ENCODE measurements at regions of chr12 and their contacts with region 1.

Region 1: DNA sequence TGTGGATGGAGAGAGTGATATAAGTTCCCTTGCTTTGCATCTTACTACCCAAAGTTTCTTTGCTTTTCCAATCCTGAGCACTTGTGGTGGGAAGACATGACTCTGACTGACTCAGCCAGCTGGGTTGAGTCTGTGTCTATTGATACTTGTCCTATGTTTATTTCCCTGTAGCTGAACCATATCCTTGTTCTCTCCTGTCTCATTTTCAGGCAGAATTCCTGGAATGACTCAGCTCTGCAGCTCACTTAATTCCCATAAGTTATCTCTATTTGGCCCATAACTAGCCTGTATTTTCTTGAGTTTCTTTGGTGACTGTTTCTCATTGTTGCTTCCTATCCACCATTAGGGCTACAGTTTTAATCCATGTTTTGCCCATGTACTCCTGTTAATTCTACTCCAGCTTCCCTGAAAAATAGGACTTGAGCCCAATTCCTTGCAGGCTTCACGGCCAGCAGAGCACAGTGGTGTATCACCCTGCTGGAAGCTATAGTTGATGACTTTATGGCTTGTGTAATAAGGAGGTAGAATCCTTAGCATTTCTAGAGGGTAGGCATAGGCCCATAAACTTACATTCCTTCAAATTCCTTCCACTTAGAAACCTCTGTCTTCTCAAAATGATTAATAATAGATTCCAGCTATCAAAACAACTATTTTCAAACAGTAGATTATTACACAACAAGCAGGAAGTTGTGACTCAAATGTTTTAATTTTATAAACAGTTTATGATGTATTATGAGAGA is 183.1 kb downstream of the TMTC3 start:
- DNase-seq: peak; percentile 98
- ATAC-seq: peak; percentile 89
- H3K4me3 ChIP-seq: peak overlapping the region; percentile 3; the same call in 1 of the 2 replicates
- H3K27ac ChIP-seq: peak overlapping the region; percentile 99
- H3K4me1 ChIP-seq: peaks cover 4% of the 10 kb centered on the region
- H3K27me3 ChIP-seq: no peaks in the 10 kb centered on the region
- CTCF ChIP-seq: 0 out of 2 replicates have a peak, but pooled peaks have one; percentile 15
- POLR2A ChIP-seq: no peak
- RAD21 ChIP-seq: peak; percentile 18; the same call in 1 of the 2 replicates

Region 2: DNA sequence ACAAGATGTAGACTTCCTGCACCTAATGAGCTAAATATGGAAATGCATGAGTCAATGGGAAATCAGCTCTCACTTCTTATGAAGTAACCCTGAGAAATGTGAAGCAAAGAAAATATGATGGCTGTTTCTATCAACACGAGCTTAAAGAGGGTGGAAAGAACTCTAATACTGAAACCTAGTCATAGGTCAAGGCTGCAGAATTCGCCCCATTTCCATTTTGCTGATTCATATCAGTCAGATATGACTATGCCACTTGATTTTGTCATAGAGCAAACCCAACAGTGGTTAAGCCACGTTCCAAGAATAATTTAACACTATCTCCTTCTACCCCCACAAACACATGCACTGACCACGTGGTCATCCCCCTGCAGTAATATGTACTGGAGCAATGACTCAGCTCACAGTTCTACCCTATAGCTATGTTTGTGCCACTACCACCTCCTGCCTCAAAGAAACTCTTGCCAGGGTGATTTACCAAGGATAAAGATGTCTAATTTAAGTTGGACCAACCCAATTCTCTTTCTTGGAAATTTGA is 25.6 kb before region 1 on chr12:
- CTCF ChIA-PET with region 1: no interaction called
- POLR2A ChIA-PET with region 1: no interaction called
- dilution Hi-C with region 1: no loop called
- in situ Hi-C with region 1: no loop called
- intact Hi-C with region 1: loop called (anchors 1 kb)
- DNase-seq: peak; percentile 98
- ATAC-seq: peak; percentile 90
- H3K4me3 ChIP-seq: no peak overlapping the region
- H3K27ac ChIP-seq: peak overlapping the region; percentile 12; the same call in 1 of the 2 replicates
- H3K4me1 ChIP-seq: peaks cover 10% of the 10 kb centered on the region
- H3K27me3 ChIP-seq: no peaks in the 10 kb centered on the region
- CTCF ChIP-seq: no peak
- POLR2A ChIP-seq: peak; percentile 36; the same call in 1 of the 2 replicates
- RAD21 ChIP-seq: no peak

Region 3: DNA sequence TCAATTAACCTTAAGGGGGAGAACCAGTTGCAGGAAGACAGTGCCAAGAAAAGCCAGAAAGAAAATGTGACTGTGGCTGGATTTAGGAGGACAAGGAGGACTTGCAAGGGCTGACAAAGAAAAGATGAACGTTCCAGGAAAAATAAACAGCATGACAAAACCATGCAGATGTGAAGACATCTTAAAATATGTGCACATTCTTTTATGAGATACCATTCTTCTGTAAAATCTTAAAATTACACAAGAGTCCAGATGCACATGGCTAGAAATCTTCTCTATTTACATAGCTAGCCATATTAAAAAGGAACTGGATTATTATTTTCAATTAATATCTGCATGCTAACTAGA is 221.6 kb after region 1 on chr12:
- CTCF ChIA-PET with region 1: no interaction called
- POLR2A ChIA-PET with region 1: no interaction called
- dilution Hi-C with region 1: no loop called
- in situ Hi-C with region 1: no loop called
- intact Hi-C with region 1: loop called (anchors 5 kb)
- DNase-seq: peak; percentile 65
- ATAC-seq: peak; percentile 56; the same call in 1 of the 2 replicates
- H3K4me3 ChIP-seq: no peak overlapping the region
- H3K27ac ChIP-seq: no peak overlapping the region
- H3K4me1 ChIP-seq: peaks cover 10% of the 10 kb centered on the region
- H3K27me3 ChIP-seq: no peaks in the 10 kb centered on the region
- CTCF ChIP-seq: no peak
- POLR2A ChIP-seq: no peak
- RAD21 ChIP-seq: no peak